Mammary epithelial cell (primary cell): ENCODE measurements at regions of chrX and their contacts with region 1.

Region 1: DNA sequence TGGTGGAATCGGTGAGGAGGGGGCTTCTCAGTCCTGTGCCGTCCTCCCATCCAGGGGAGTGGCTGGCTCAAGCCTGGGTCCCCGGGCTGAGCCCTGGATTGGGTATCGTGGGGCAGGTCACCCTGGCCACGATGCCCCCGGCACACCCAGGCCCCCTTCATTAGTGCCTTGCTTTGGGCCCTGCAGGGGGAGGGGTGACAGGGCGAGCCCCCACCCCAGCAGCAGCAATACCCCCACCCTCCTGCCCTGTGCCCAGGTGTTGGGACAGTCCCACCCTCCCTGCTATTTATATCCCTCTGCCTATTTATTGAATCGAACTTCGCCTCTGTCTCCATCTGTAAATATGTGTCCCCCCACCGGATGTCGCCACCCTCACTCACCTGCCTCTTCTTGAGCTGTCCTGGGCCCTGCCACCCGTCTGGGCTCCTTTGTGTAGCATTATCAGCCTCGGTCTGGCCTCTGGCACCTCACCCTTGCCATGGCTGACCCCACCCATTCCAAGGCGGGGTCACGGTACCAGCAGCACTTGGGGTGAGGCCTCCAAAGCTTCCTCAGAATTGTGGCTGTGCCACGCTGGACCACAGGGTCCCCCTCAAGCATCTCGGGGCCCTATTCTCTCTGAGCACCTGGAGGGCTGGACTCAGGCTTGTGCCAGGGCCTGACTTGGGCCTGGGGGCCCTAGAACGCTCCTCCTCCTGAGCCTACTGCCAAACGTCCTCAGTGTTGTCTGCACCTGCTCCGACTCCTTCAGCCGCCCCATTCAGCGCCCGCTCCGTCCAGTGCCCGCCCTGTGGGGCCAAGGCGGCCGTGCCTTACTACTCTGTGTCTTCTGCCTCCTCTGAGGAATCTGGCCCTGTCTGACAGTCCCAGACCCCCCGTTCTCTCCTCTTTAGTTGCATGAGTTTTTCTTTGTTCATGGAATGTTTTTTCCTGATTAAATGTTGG is 6.1 kb downstream of the LAGE3 start:
- DNase-seq: no peak
- H3K4me3 ChIP-seq: no peak overlapping the region
- H3K27ac ChIP-seq: no peak overlapping the region
- H3K4me1 ChIP-seq: no peaks in the 10 kb centered on the region
- H3K27me3 ChIP-seq: no peaks in the 10 kb centered on the region
- CTCF ChIP-seq: no peak

Region 2: GRCh38 chrX:154419732-154420364 is 53.1 kb before region 1 on chrX:
- CTCF ChIA-PET with region 1: no interaction called
- dilution Hi-C with region 1: loop called (anchors 5 kb)
- in situ Hi-C with region 1: no loop called
- intact Hi-C with region 1: no loop called
- DNase-seq: no peak
- H3K4me3 ChIP-seq: no peak overlapping the region
- H3K27ac ChIP-seq: no peak overlapping the region
- H3K4me1 ChIP-seq: no peaks in the 10 kb centered on the region
- H3K27me3 ChIP-seq: no peaks in the 10 kb centered on the region
- CTCF ChIP-seq: no peak

Region 3: GRCh38 chrX:154490414-154491083 is 17.6 kb after region 1 on chrX and contains the start of gene SLC10A3:
- CTCF ChIA-PET with region 1: no interaction called
- dilution Hi-C with region 1: no loop called
- in situ Hi-C with region 1: no loop called
- intact Hi-C with region 1: no loop called
- DNase-seq: peak; percentile 88
- H3K4me3 ChIP-seq: peak within 1 kb of the TSS; percentile 64 to 69 (median 68)
- H3K27ac ChIP-seq: peak within 1 kb of the TSS; percentile 75
- H3K4me1 ChIP-seq: peaks cover 5% of the 10 kb centered on the region
- H3K27me3 ChIP-seq: no peaks in the 10 kb centered on the region
- CTCF ChIP-seq: no peak
- total RNA-seq, gene SLC10A3: 27.2 to 29.6 TPM

Region 4: DNA sequence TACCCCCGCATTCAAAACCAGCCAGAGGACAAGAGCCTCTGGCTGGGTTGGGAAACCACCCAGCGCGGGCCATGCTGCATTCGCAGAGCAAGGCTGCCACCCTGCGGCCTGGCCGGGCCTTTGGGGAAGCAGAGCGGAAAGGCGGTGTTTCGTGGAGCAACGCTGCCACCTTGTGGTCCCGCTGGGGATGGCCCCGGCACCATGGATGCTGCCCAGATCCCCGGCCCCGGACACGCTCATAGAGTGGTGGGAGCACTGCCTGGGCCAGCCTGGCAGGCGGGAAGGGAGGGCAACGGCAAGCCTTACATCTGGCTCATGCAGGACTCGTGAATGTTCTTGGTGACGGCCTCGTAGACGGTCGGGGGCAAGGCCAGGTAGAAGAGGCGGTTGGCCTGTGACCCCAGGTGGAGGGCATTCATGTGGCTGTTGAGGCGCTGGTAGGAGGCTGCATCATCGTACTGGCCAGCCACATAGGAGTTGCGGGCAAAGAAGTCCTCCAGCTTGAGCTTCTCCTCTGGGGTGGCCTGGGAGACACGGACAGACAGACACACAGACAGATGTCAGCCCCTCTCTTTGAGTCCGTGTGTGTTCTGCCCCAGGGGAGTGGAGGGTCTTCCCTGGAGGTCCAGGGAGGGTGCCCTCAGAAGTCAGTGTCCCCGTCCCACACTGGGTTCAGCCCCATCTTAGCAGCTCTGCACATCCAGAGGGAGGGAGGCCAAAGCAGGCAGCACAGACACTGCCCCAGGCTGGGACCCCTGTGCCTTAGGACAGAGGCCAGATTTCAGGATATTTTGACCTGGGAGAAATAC is 62.1 kb after region 1 on chrX:
- CTCF ChIA-PET with region 1: interaction called, 17 read pairs
- dilution Hi-C with region 1: no loop called
- in situ Hi-C with region 1: no loop called
- intact Hi-C with region 1: no loop called
- DNase-seq: peak; percentile 69
- H3K4me3 ChIP-seq: no peak overlapping the region
- H3K27ac ChIP-seq: no peak overlapping the region
- H3K4me1 ChIP-seq: peaks cover 7% of the 10 kb centered on the region
- H3K27me3 ChIP-seq: no peaks in the 10 kb centered on the region
- CTCF ChIP-seq: peak; percentile 94 to 97